ENCODE measurements at regions of chr1 and their contacts with region 1.

Region 1: DNA sequence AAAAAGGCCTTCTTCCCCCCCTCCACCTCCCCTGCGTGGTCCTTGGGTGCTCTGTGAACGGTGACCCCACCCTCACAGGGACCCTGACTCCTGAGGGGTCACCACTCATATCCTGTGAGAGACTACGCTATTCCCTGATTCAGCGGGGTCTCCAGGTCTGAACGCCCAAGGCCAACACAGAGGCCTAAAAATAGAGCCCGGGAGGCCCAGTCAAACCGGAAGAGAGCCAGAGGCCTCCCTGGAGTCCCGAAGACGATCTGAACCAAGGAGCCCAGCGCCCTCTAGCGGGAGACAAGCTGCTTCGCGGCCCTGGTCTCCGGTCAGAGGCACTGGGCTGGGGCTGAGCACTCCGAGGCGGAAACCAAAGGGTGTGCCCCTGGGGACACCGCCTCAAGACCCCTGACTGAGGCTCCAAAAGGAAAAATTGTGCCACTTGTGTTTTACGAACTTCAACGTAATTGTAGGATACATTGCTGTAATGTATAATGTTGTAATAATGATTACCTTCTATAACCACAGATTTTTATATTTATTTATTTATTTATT is 42.4 kb upstream of the PSEN2 start:
- DNase-seq: peak; percentile 90
- H3K4me3 ChIP-seq: no peak overlapping the region
- H3K4me3 Mint-ChIP-seq: no peak overlapping the region
- H3K27ac Mint-ChIP-seq: no peak overlapping the region
- H3K4me1 ChIP-seq: no peaks in the 10 kb centered on the region
- H3K4me1 Mint-ChIP-seq: no peaks in the 10 kb centered on the region
- H3K27me3 ChIP-seq: no peaks in the 10 kb centered on the region
- H3K27me3 Mint-ChIP-seq: no peaks in the 10 kb centered on the region
- CTCF ChIP-seq: peak; percentile 78 to 81

Region 2: DNA sequence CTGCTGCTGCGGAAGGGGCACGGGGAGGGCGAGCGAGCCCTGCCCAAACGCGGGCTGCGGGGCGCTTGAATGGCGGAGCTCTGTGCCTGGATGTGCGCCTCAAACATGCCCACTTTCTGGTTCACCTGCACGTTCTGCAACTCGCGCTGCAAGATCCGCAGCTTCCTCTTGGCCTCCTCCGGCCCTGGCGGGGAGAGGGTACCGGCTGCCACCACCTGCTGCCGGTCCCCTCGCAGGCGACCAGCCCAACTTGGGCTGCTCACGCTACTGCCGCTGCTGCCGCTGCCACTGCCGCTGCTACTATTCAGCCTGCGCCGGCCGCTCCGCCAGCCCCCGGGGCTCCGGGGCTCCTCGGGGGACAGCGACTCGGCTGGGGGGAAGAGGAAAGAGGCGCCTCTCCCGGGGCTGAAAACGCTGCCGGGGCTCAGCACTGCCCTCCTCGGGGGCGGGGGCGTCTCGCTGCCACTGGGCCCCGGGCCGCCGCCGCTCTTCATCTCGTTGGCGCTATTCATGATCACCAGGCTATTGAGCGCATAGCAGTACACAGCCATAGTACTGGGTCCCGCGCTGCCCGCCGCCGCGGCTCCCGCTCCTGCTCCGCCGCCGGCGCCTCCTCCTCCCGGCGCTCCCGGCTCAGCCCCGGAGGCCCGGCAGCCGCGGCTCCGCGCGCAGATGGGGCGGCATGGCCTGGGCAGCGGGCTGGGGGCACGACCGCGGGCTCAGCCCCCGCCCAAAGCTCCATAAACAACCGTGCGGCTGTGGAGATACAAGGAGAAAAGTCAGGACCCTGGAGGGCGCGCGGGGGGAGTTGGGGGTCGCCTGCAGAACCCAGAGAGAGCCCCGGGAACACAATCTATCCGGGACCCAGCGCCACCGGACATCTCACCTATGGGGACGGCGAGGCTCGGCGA is 90.9 kb before region 1 on chr1:
- CTCF ChIA-PET with region 1: interaction called, 3 read pairs
- POLR2A ChIA-PET with region 1: no interaction called
- intact Hi-C with region 1: loop called (anchors 5 kb)
- DNase-seq: no peak
- H3K4me3 ChIP-seq: peak overlapping the region; percentile 61
- H3K4me3 Mint-ChIP-seq: peak overlapping the region; percentile 84
- H3K27ac Mint-ChIP-seq: no peak overlapping the region
- H3K4me1 ChIP-seq: peaks cover 3% of the 10 kb centered on the region; the same call in 1 of the 2 replicates
- H3K4me1 Mint-ChIP-seq: no peaks in the 10 kb centered on the region
- H3K27me3 ChIP-seq: no peaks in the 10 kb centered on the region
- H3K27me3 Mint-ChIP-seq: no peaks in the 10 kb centered on the region
- CTCF ChIP-seq: no peak